ENCODE measurements at regions of chr15 and their contacts with region 1.

Region 1: DNA sequence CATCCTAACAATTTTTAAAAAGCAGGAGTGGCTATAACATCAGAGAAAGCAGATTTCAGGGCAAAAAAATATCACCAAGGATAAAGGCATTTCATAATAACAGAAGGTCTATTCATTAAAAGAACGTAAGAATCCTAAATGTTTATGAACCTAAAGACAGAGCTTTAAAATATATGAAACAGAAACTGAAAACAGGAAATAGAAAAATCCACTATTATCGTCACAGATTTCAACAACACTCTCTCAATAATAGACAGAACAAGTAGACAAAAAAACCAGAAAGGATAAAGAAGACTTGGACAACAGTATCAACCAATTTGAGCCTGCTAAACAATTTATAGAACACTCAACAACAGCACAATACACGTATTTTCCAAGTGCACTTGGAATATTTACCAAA is 71.4 kb downstream of the FBXL22 start:
- DNase-seq: peak in 2 of 9 experiments; percentile 27 to 60
- ATAC-seq: peak; percentile 73
- H3K4me3 ChIP-seq: peak overlapping the region; percentile 4 to 32
- H3K4me3 Mint-ChIP-seq: peak overlapping the region; percentile 64
- H3K27ac ChIP-seq: peak overlapping the region; percentile 55 to 82
- H3K27ac Mint-ChIP-seq: peak overlapping the region; percentile 86
- H3K4me1 ChIP-seq: peaks cover 26% of the 10 kb centered on the region
- H3K4me1 Mint-ChIP-seq: peaks cover 50% of the 10 kb centered on the region
- H3K27me3 ChIP-seq: no peaks in the 10 kb centered on the region
- H3K27me3 Mint-ChIP-seq: no peaks in the 10 kb centered on the region
- CTCF ChIP-seq: no peak

Region 2: DNA sequence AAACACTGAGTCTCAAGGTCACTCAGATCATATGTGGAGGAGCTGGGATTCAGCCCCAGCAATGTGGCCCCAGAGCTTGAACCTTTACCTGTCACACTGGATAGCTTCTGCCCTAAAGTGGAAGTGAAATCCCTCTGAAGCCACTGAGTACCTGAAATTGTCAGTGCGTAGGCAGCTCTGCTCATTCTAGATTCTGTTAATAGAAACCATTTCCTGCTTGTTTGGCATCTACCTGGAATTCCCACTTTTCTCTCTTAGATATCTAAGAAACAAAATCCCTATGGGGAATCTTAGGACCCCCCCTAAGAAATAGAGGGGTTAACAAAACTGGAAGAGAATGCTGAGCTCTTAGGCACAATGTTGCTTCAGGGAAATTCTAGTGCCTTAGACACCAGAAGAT is 41.6 kb before region 1 on chr15:
- CTCF ChIA-PET with region 1: interaction called, 4 read pairs
- POLR2A ChIA-PET with region 1: no interaction called
- intact Hi-C with region 1: loop called in 1 of 2 experiments (anchors 5 kb)
- DNase-seq: no peak
- ATAC-seq: no peak
- H3K4me3 ChIP-seq: no peak overlapping the region
- H3K4me3 Mint-ChIP-seq: no peak overlapping the region
- H3K27ac ChIP-seq: no peak overlapping the region
- H3K27ac Mint-ChIP-seq: no peak overlapping the region
- H3K4me1 ChIP-seq: no peaks in the 10 kb centered on the region
- H3K4me1 Mint-ChIP-seq: no peaks in the 10 kb centered on the region
- H3K27me3 ChIP-seq: no peaks in the 10 kb centered on the region
- H3K27me3 Mint-ChIP-seq: no peaks in the 10 kb centered on the region
- CTCF ChIP-seq: no peak

Region 3: GRCh38 chr15:63638839-63639238 is 29.8 kb before region 1 on chr15:
- CTCF ChIA-PET with region 1: no interaction called
- POLR2A ChIA-PET with region 1: no interaction called
- intact Hi-C with region 1: loop called in 1 of 2 experiments (anchors 5 kb)
- DNase-seq: no peak
- ATAC-seq: no peak
- H3K4me3 ChIP-seq: no peak overlapping the region
- H3K4me3 Mint-ChIP-seq: no peak overlapping the region
- H3K27ac ChIP-seq: no peak overlapping the region
- H3K27ac Mint-ChIP-seq: no peak overlapping the region
- H3K4me1 ChIP-seq: no peaks in the 10 kb centered on the region
- H3K4me1 Mint-ChIP-seq: no peaks in the 10 kb centered on the region
- H3K27me3 ChIP-seq: no peaks in the 10 kb centered on the region
- H3K27me3 Mint-ChIP-seq: no peaks in the 10 kb centered on the region
- CTCF ChIP-seq: no peak

Region 4: GRCh38 chr15:63655683-63656372 is 12.8 kb before region 1 on chr15:
- CTCF ChIA-PET with region 1: no interaction called
- POLR2A ChIA-PET with region 1: no interaction called
- intact Hi-C with region 1: no loop called
- DNase-seq: no peak
- ATAC-seq: no peak
- H3K4me3 ChIP-seq: no peak overlapping the region
- H3K4me3 Mint-ChIP-seq: no peak overlapping the region
- H3K27ac ChIP-seq: no peak overlapping the region
- H3K27ac Mint-ChIP-seq: no peak overlapping the region
- H3K4me1 ChIP-seq: no peaks in the 10 kb centered on the region
- H3K4me1 Mint-ChIP-seq: no peaks in the 10 kb centered on the region
- H3K27me3 ChIP-seq: no peaks in the 10 kb centered on the region
- H3K27me3 Mint-ChIP-seq: no peaks in the 10 kb centered on the region
- CTCF ChIP-seq: no peak

Region 5: DNA sequence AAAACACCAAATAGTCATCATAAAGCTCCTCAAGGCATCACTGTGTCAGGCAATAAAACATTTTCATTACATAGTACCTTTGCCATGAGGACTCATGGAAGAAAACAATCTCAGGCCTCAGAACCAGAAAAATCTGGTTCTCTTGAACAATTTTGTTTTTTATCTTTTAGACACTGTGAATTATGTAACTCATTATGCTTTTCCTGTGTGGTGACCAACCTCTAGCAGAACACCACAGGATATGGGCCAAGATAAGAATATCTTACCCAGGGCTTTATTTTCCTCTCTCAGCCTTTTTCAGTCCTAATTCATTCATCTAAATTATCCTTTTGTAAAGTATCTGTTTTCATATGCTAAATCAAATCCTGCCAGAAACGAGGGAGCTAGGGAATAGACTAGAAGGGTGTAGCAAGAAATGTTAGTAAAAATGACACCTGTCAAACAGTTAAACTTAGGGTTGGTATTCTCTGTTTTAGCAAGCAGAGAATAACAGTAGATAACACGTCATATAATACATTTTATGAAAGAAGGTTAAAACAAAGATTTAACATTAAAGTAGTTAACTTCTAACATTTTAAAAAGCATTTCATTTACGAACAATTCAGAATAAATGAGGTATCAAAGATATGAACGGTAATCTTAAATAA is 39.6 kb after region 1 on chr15:
- CTCF ChIA-PET with region 1: no interaction called
- POLR2A ChIA-PET with region 1: interaction called, 3 read pairs
- intact Hi-C with region 1: loop called in 1 of 2 experiments (anchors 5 kb)
- DNase-seq: peak in 3 of 9 experiments; percentile 33 to 76 (median 59)
- ATAC-seq: peak; percentile 81
- H3K4me3 ChIP-seq: no peak overlapping the region
- H3K4me3 Mint-ChIP-seq: peak overlapping the region; percentile 32
- H3K27ac ChIP-seq: peak overlapping the region; percentile 72 to 86
- H3K27ac Mint-ChIP-seq: peak overlapping the region; percentile 92
- H3K4me1 ChIP-seq: peaks cover 39% of the 10 kb centered on the region
- H3K4me1 Mint-ChIP-seq: peaks cover 27% of the 10 kb centered on the region
- H3K27me3 ChIP-seq: no peaks in the 10 kb centered on the region
- H3K27me3 Mint-ChIP-seq: no peaks in the 10 kb centered on the region
- CTCF ChIP-seq: no peak

Measured in CD8-positive, alpha-beta T cell (primary cell).